GM18951 (cell line): ENCODE measurements at regions of chr4 and their contacts with region 1.

Region 1: GRCh38 chr4:40731792-40732245 is 17.9 kb upstream of the NSUN7 start:
- POLR2A ChIP-seq: no peak

Region 2: DNA sequence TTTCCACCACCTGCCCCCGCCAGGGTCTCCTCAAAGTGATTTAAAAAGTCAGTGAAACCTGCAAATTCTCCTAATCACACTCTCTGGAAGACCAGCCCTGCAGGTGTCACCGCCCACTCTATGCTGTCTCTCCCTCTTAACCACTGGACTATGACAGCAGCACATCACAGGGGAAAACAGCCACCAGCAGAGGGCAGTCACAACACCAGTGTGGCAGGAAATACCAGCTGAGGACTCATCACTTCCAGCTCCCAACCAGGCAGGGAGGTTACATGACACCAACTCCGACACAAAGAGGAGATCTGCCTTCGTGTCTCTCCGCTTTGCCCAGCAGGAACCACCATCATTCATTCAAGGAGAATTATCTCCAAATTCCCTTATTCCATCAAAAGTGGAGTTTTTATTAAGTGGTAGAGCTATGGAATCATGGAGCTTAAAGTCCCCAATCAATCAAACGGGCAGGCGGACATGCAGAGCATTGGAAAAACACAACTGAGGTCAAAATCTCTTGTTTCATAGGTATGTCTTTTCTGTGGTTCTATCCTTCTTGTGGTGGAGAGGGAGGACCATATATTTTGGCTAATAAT is 109.3 kb after region 1 on chr4:
- in situ Hi-C with region 1: loop called (anchors 5 kb)
- POLR2A ChIP-seq: no peak

Region 3: DNA sequence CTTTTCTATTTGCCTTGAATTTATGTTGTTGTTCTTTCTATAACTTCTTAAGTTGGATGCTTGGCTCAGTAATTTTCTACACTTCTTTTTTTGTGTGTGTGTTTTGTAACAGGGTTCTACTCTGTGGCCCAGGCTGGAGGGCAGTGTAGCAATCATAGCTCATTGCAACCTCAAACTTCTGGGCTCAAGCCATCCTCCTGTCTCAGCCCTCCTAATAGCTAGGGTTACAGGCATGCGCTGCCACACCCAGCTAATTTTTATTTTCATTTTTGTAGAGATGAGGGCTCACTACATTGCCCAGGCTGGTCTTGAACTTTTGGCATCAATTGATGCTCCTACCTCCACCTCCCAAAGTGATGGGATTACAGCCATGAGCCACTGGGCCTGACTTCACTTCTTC is 504.2 kb after region 1 on chr4:
- in situ Hi-C with region 1: no loop called
- POLR2A ChIP-seq: no peak